Caco-2 (cell line): ENCODE measurements at regions of chr5 and their contacts with region 1.

Region 1: GRCh38 chr5:142548739-142549275 is 137.1 kb downstream of the FGF1 start:
- DNase-seq: peak; percentile 81 to 86
- H3K4me3 ChIP-seq: no peak overlapping the region
- H3K4me3 Mint-ChIP-seq: no peak overlapping the region
- H3K27ac Mint-ChIP-seq: no peak overlapping the region
- H3K4me1 ChIP-seq: peaks cover 8% of the 10 kb centered on the region
- H3K4me1 Mint-ChIP-seq: peaks cover 24% of the 10 kb centered on the region
- H3K27me3 ChIP-seq: no peaks in the 10 kb centered on the region; the same call in 1 of the 2 replicates
- H3K27me3 Mint-ChIP-seq: no peaks in the 10 kb centered on the region
- CTCF ChIP-seq: peak; percentile 87 to 90

Region 2: GRCh38 chr5:141968914-141969608 is 579.7 kb before region 1 on chr5 and contains the start of gene RNF14:
- CTCF ChIA-PET with region 1: no interaction called
- POLR2A ChIA-PET with region 1: no interaction called
- intact Hi-C with region 1: no loop called
- DNase-seq: peak; percentile 94 to 95
- H3K4me3 ChIP-seq: peak within 1 kb of the TSS; percentile 84
- H3K4me3 Mint-ChIP-seq: peak within 1 kb of the TSS; percentile 82
- H3K27ac Mint-ChIP-seq: peak within 1 kb of the TSS; percentile 88
- H3K4me1 ChIP-seq: peaks cover 23% of the 10 kb centered on the region
- H3K4me1 Mint-ChIP-seq: peaks cover 6% of the 10 kb centered on the region
- H3K27me3 ChIP-seq: no peaks in the 10 kb centered on the region
- H3K27me3 Mint-ChIP-seq: no peaks in the 10 kb centered on the region
- CTCF ChIP-seq: peak; percentile 89 to 94
- total RNA-seq, gene RNF14: 35.1 and 38.7 TPM in 2 replicates

Region 3: DNA sequence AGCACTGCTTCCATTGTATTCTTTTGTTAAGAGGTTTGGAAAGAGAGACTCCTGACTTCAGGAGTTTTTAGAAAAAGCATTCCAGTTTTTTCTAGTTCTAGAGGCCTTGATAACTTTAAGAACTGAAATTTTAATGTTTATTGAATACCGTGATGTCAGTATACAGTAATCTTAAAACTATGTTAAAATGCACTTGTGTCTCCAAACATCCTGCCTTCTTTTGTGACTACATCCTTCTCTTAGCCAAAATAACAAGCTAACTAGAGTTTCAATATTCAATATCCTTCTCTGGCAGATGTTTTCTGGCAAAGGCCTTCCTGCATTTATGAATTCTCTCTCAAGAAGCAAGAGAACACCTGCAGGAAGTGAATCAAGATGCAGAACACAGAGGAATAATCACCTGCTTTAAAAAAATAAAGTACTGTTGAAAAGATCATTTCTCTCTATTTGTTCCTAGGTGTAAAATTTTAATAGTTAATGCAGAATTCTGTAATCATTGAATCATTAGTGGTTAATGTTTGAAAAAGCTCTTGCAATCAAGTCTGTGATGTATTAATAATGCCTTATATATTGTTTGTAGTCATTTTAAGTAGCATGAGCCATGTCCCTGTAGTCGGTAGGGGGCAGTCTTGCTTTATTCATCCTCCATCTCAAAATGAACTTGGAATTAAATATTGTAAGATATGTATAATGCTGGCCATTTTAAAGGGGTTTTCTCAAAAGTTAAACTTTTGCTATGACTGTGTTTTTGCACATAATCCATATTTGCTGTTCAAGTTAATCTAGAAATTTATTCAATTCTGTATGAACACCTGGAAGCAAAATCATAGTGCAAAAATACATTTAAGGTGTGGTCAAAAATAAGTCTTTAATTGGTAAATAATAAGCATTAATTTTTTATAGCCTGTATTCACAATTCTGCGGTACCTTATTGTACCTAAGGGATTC is 397.1 kb before region 1 on chr5:
- CTCF ChIA-PET with region 1: interaction called, 4 read pairs
- POLR2A ChIA-PET with region 1: no interaction called
- intact Hi-C with region 1: loop called (anchors 1 kb)
- DNase-seq: peak in 1 of 2 experiments; percentile 65
- H3K4me3 ChIP-seq: no peak overlapping the region
- H3K4me3 Mint-ChIP-seq: no peak overlapping the region
- H3K27ac Mint-ChIP-seq: no peak overlapping the region
- H3K4me1 ChIP-seq: peaks cover 4% of the 10 kb centered on the region; the same call in 1 of the 2 replicates
- H3K4me1 Mint-ChIP-seq: no peaks in the 10 kb centered on the region
- H3K27me3 ChIP-seq: no peaks in the 10 kb centered on the region
- H3K27me3 Mint-ChIP-seq: no peaks in the 10 kb centered on the region
- CTCF ChIP-seq: peak; percentile 83 to 87

Region 4: DNA sequence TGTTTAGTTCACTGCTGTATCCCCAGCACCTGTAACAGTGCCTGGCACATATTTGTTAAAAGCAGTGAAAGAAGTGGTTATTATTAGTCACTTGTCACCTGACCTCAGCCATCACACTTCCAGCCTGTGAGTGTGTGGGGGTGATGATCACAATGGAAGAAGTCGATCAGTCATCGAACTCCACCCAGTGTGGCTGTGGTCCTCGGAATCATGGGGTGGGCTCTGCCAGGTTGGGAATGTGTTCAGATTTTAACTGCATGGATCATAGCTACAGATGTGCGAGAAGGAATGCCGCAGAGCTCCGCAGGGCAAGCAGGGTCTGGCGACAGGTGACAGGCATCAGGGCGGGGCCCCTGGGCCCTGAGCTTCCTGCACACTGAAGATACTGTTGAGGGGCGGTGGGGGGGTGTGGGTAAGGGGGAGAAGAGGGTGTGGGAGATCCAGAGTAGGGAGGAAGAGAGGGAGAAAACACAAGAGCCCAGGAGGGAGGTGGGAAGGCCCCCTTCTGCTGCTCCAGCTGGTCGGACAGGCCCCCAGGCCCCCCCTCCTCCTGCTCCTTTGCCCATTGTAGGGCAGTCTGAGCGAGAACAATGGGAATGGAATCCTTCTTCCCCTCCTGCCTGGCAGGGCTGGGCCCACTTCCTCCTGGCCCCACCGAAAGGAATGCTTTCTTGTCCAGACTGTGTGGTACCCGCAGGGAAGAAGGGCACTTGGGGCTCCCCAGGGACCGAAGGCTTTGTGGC is 313.6 kb before region 1 on chr5:
- CTCF ChIA-PET with region 1: no interaction called
- POLR2A ChIA-PET with region 1: no interaction called
- intact Hi-C with region 1: loop called (anchors 5 kb)
- DNase-seq: peak; percentile 41 to 65
- H3K4me3 ChIP-seq: no peak overlapping the region
- H3K4me3 Mint-ChIP-seq: peak overlapping the region; percentile 83
- H3K27ac Mint-ChIP-seq: peak overlapping the region; percentile 97
- H3K4me1 ChIP-seq: peaks cover 49% of the 10 kb centered on the region
- H3K4me1 Mint-ChIP-seq: peaks cover 58% of the 10 kb centered on the region
- H3K27me3 ChIP-seq: no peaks in the 10 kb centered on the region
- H3K27me3 Mint-ChIP-seq: no peaks in the 10 kb centered on the region
- CTCF ChIP-seq: no peak

Region 5: GRCh38 chr5:142356716-142357473 is 191.9 kb before region 1 on chr5:
- CTCF ChIA-PET with region 1: interaction called, 7 read pairs
- POLR2A ChIA-PET with region 1: no interaction called
- intact Hi-C with region 1: loop called (anchors 2 kb)
- DNase-seq: peak; percentile 71 to 73
- H3K4me3 ChIP-seq: peak overlapping the region; percentile 76
- H3K4me3 Mint-ChIP-seq: peak overlapping the region; percentile 71
- H3K27ac Mint-ChIP-seq: peak overlapping the region; percentile 32
- H3K4me1 ChIP-seq: peaks cover 28% of the 10 kb centered on the region
- H3K4me1 Mint-ChIP-seq: peaks cover 15% of the 10 kb centered on the region
- H3K27me3 ChIP-seq: no peaks in the 10 kb centered on the region
- H3K27me3 Mint-ChIP-seq: no peaks in the 10 kb centered on the region
- CTCF ChIP-seq: no peak

Region 6: GRCh38 chr5:142507531-142508372 is 41.1 kb before region 1 on chr5:
- CTCF ChIA-PET with region 1: interaction called, 3 read pairs
- POLR2A ChIA-PET with region 1: no interaction called
- intact Hi-C with region 1: loop called (anchors 5 kb)
- DNase-seq: peak in 1 of 2 experiments; percentile 8
- H3K4me3 ChIP-seq: peak overlapping the region; percentile 13; the same call in 1 of the 2 replicates
- H3K4me3 Mint-ChIP-seq: peak overlapping the region; percentile 57
- H3K27ac Mint-ChIP-seq: no peak overlapping the region
- H3K4me1 ChIP-seq: peaks cover 11% of the 10 kb centered on the region; the same call in 1 of the 2 replicates
- H3K4me1 Mint-ChIP-seq: peaks cover 20% of the 10 kb centered on the region
- H3K27me3 ChIP-seq: no peaks in the 10 kb centered on the region; the same call in 1 of the 2 replicates
- H3K27me3 Mint-ChIP-seq: no peaks in the 10 kb centered on the region
- CTCF ChIP-seq: no peak

Region 7: DNA sequence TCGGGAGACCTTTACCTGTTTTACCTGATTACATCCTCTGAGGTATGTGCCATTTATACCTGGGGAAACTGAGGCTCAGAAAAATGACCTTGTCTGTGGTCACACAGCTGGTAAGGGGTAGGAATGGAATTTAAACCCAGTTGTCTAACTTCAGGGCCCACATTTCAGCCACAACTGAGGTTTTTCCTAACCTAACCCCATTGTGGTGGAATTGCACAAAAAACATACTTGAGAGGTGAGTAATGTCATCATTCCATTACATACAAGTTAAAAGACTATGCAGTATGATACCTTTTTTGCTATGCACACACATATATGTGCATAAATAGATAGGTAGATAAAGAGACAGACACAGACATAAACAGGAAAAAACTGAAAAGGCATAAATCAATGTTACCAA is 123.0 kb after region 1 on chr5:
- CTCF ChIA-PET with region 1: no interaction called
- POLR2A ChIA-PET with region 1: no interaction called
- intact Hi-C with region 1: no loop called
- DNase-seq: no peak
- H3K4me3 ChIP-seq: no peak overlapping the region
- H3K4me3 Mint-ChIP-seq: no peak overlapping the region
- H3K27ac Mint-ChIP-seq: no peak overlapping the region
- H3K4me1 ChIP-seq: no peaks in the 10 kb centered on the region; the same call in 1 of the 2 replicates
- H3K4me1 Mint-ChIP-seq: no peaks in the 10 kb centered on the region
- H3K27me3 ChIP-seq: no peaks in the 10 kb centered on the region
- H3K27me3 Mint-ChIP-seq: no peaks in the 10 kb centered on the region
- CTCF ChIP-seq: no peak